ENCODE measurements at regions of chr1 and their contacts with region 1.

Region 1: DNA sequence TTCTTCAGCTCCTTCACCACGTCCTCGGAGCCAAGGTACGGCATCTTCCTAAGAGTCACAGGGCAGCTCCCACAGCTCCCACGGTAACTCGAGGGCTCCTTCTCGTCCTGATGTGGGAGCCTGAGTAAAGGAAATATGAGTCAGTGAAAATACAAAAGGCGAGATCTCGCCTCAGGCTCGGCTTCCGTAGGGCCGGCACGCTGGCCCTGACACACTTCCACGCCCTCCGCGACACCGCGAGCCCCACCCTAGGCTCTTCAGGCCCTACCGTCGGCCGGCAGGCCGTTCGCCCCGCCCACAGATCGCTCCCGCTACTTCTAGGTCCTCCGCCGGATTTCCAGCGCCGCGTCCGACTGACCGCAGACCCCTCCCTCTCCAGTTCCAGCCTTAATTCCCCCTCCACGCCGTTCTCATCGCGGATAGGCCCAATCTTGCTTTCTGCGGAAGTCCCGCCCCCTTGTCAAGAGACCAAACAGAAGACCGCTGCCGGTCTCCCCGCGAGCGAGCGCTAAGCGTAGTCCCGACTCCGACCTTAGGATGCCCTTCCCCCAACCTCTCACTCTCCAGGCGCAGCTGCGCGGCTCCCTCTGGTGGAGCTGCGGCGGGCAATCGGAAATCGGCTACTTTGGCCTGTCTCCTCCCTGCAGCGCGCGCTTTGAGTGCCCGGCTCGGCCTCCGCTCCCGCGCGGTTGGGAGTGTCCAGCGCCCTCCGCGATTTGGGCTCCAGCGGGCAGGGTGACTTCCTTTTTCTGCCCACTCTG is at the starts of genes AP4B1 and DCLRE1B:
- DNase-seq: peak; percentile 100
- H3K4me3 ChIP-seq: peak within 1 kb of the TSS; percentile 72 to 87 (median 86)
- H3K27ac ChIP-seq: peak within 1 kb of the TSS; percentile 88
- H3K4me1 ChIP-seq: peaks cover 10% of the 10 kb centered on the region
- H3K27me3 ChIP-seq: no peaks in the 10 kb centered on the region
- CTCF ChIP-seq: peak; percentile 47 to 86
- total RNA-seq, gene AP4B1: 8.8 to 21.4 TPM
- total RNA-seq, gene DCLRE1B: 4.7 to 12.1 TPM

Region 2: GRCh38 chr1:113140588-113141446 is 764.0 kb before region 1 on chr1:
- CTCF ChIA-PET with region 1: no interaction called
- dilution Hi-C with region 1: no loop called
- in situ Hi-C with region 1: loop called in 1 of 2 experiments (anchors 25 kb)
- intact Hi-C with region 1: loop called (anchors 1 kb)
- DNase-seq: peak; percentile 32
- H3K4me3 ChIP-seq: no peak overlapping the region
- H3K27ac ChIP-seq: no peak overlapping the region
- H3K4me1 ChIP-seq: peaks cover 22% of the 10 kb centered on the region
- H3K27me3 ChIP-seq: no peaks in the 10 kb centered on the region
- CTCF ChIP-seq: peak; percentile 87 to 93

Region 3: GRCh38 chr1:113811888-113812660 is 92.8 kb before region 1 on chr1 and contains the start of gene RSBN1:
- CTCF ChIA-PET with region 1: no interaction called
- dilution Hi-C with region 1: no loop called
- in situ Hi-C with region 1: no loop called
- intact Hi-C with region 1: loop called (anchors 1 kb)
- DNase-seq: peak; percentile 100
- H3K4me3 ChIP-seq: peak within 1 kb of the TSS; percentile 89 to 95 (median 89)
- H3K27ac ChIP-seq: peak within 1 kb of the TSS; percentile 89
- H3K4me1 ChIP-seq: peaks cover 18% of the 10 kb centered on the region
- H3K27me3 ChIP-seq: no peaks in the 10 kb centered on the region
- CTCF ChIP-seq: no peak
- total RNA-seq, gene RSBN1: 10.0 to 12.5 TPM

Region 4: GRCh38 chr1:113871597-113872113 is 33.2 kb before region 1 on chr1 and contains the start of gene PTPN22:
- CTCF ChIA-PET with region 1: no interaction called
- dilution Hi-C with region 1: no loop called
- in situ Hi-C with region 1: no loop called
- intact Hi-C with region 1: loop called (anchors 2 kb)
- DNase-seq: peak; percentile 87
- H3K4me3 ChIP-seq: no peak within 1 kb of the TSS
- H3K27ac ChIP-seq: no peak within 1 kb of the TSS
- H3K4me1 ChIP-seq: peaks cover 50% of the 10 kb centered on the region
- H3K27me3 ChIP-seq: no peaks in the 10 kb centered on the region
- CTCF ChIP-seq: no peak
- total RNA-seq, gene PTPN22: under 0.01 to 0.40 TPM

Region 5: GRCh38 chr1:113949007-113949406 is 44.2 kb after region 1 on chr1:
- CTCF ChIA-PET with region 1: no interaction called
- dilution Hi-C with region 1: no loop called
- in situ Hi-C with region 1: no loop called
- intact Hi-C with region 1: loop called (anchors 5 kb)
- DNase-seq: no peak
- H3K4me3 ChIP-seq: no peak overlapping the region
- H3K27ac ChIP-seq: no peak overlapping the region
- H3K4me1 ChIP-seq: no peaks in the 10 kb centered on the region
- H3K27me3 ChIP-seq: no peaks in the 10 kb centered on the region
- CTCF ChIP-seq: peak; percentile 31 to 36